Psoas muscle (tissue), 8 donors: ENCODE measurements at regions of chr2 and their contacts with region 1.

Region 1: DNA sequence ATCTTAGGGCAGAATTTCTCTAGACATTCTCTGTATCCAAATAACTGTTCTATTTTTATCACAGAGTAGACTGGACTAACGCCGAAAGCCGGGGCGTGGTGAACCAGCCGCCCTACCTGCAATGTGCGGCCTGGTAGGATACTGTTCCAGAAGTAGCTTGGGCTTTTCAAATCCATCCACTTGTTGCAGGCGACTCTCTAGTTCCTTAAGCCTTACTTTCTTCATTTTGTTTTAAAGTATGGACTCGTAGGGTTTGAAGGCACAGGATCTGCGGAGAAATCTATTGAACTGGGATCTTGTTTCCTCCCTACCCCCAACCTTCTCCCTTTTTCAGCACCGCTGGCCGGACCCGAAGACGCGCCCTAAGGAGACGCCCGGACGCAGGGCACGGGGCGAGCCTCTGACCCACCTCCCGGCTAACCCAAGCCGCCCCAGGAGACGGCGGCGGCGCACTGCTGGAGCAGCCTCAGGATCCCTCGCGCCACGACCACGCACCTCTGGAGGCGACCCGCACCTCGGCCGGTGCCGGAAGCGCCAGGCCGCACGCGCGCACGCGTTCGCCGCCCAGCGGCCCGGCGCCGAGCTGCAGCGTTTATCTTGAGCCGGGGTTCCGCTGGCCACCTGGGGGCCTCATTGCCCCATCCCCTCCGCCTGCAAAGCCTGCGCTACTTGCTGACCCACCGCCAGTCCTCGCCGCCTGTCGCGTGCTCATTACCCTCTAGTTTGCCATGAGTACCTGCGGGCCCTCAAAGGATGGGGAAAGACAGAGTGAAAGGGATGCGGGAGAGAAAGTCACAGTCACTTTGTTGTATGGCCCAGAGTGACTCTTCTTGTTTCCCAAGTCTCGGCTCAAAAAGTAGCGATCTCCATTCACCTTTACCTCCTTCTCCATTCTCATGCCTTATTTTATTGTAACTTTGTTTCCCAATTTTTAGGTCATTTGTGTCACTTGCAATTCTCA is at the start of gene METTL5:
- DNase-seq: peak; percentile 85 to 92
- ATAC-seq: peak; percentile 81 to 85 (median 82)
- H3K4me3 ChIP-seq: peak within 1 kb of the TSS; percentile 88
- H3K27ac ChIP-seq: peak within 1 kb of the TSS; percentile 98
- H3K4me1 ChIP-seq: peaks cover 36% of the 10 kb centered on the region
- H3K27me3 ChIP-seq: no peaks in the 10 kb centered on the region
- CTCF ChIP-seq: peak; percentile 96
- total RNA-seq, gene METTL5: 50.7 to 75.4 (median 56.5) TPM

Region 2: DNA sequence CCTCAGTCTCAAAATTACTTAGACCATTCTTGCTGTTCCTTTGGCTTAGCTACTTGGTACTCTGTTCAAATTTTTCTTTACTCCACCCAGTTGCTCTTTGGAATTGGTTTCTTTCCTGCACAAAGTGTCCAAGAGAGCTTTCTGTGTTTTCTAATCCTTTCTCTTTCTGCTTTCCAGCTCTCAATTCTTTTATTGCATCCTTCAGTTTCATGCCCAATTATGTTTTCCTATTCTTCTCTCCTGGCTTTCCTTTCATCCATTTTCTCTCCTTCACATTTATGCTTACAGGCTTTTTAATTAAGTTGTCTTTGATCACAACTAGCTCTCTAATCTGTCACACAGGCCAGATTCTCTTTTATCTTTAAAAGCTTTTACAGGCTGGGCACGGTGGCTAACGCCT is 40.8 kb after region 1 on chr2:
- intact Hi-C with region 1: loop called in 1 of 2 experiments (anchors 5 kb)
- DNase-seq: no peak
- ATAC-seq: no peak
- H3K4me3 ChIP-seq: no peak overlapping the region
- H3K27ac ChIP-seq: no peak overlapping the region
- H3K4me1 ChIP-seq: peaks cover 12% of the 10 kb centered on the region
- H3K27me3 ChIP-seq: no peaks in the 10 kb centered on the region
- CTCF ChIP-seq: no peak

Region 3: GRCh38 chr2:169877398-169877797 is 52.7 kb after region 1 on chr2:
- intact Hi-C with region 1: loop called in 1 of 2 experiments (anchors 2 kb)
- DNase-seq: no peak
- ATAC-seq: peak in 3 of 4 donors; percentile 57 to 79 (median 67)
- H3K4me3 ChIP-seq: no peak overlapping the region
- H3K27ac ChIP-seq: no peak overlapping the region
- H3K4me1 ChIP-seq: no peaks in the 10 kb centered on the region
- H3K27me3 ChIP-seq: no peaks in the 10 kb centered on the region
- CTCF ChIP-seq: peak; percentile 45

Region 4: DNA sequence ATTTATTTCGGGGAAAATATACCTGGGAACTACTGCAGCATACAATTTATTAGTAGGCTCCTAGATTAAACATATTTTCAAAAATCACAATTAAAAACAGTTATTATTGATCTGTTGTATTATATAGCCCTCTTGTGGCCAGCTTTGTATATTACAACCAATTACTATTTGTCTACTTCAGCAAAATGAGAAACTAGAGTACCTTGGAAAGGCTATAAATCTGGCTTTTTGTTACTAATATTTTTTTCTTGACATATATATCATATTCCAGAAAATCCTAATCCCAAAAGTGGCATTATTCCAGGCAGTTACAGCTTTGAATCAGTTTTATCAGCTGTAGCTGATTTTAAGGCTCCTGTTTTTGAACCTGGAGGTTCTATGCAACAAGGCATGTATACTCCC is 103.8 kb after region 1 on chr2:
- intact Hi-C with region 1: loop called (anchors 2 to 5 kb)
- DNase-seq: no peak
- ATAC-seq: peak in 2 of 4 donors; percentile 62 to 64
- H3K4me3 ChIP-seq: no peak overlapping the region
- H3K27ac ChIP-seq: no peak overlapping the region
- H3K4me1 ChIP-seq: no peaks in the 10 kb centered on the region
- H3K27me3 ChIP-seq: no peaks in the 10 kb centered on the region
- CTCF ChIP-seq: peak; percentile 81

Region 5: GRCh38 chr2:169997140-169997887 is 172.7 kb after region 1 on chr2:
- intact Hi-C with region 1: no loop called
- DNase-seq: no peak
- ATAC-seq: peak in 1 of 4 donors; percentile 11
- H3K4me3 ChIP-seq: no peak overlapping the region
- H3K27ac ChIP-seq: no peak overlapping the region
- H3K4me1 ChIP-seq: peaks cover 7% of the 10 kb centered on the region
- H3K27me3 ChIP-seq: no peaks in the 10 kb centered on the region
- CTCF ChIP-seq: no peak

Region 6: GRCh38 chr2:170054997-170055396 is 230.3 kb after region 1 on chr2:
- intact Hi-C with region 1: no loop called
- DNase-seq: no peak
- ATAC-seq: peak in 1 of 4 donors; percentile 12
- H3K4me3 ChIP-seq: no peak overlapping the region
- H3K27ac ChIP-seq: no peak overlapping the region
- H3K4me1 ChIP-seq: no peaks in the 10 kb centered on the region
- H3K27me3 ChIP-seq: no peaks in the 10 kb centered on the region
- CTCF ChIP-seq: no peak